Natural killer cell (primary cell): ENCODE measurements at regions of chr17 and their contacts with region 1.

Region 1: GRCh38 chr17:996554-997344 is at the start of gene TIMM22:
- DNase-seq: peak; percentile 92 to 97
- ATAC-seq: peak; percentile 91 to 97 (median 91)
- H3K4me3 ChIP-seq: peak within 1 kb of the TSS; percentile 92
- H3K4me3 Mint-ChIP-seq: peak within 1 kb of the TSS; percentile 97
- H3K27ac ChIP-seq: peak within 1 kb of the TSS; percentile 56
- H3K27ac Mint-ChIP-seq: peak within 1 kb of the TSS; percentile 96
- H3K4me1 ChIP-seq: peaks cover 19% of the 10 kb centered on the region
- H3K4me1 Mint-ChIP-seq: peaks cover 21 to 25% of the 10 kb centered on the region in 2 donors
- H3K27me3 ChIP-seq: no peaks in the 10 kb centered on the region
- H3K27me3 Mint-ChIP-seq: no peaks in the 10 kb centered on the region
- CTCF ChIP-seq: peak; percentile 89
- total RNA-seq, gene TIMM22: 7.8 to 11.3 (median 8.9) TPM

Region 2: DNA sequence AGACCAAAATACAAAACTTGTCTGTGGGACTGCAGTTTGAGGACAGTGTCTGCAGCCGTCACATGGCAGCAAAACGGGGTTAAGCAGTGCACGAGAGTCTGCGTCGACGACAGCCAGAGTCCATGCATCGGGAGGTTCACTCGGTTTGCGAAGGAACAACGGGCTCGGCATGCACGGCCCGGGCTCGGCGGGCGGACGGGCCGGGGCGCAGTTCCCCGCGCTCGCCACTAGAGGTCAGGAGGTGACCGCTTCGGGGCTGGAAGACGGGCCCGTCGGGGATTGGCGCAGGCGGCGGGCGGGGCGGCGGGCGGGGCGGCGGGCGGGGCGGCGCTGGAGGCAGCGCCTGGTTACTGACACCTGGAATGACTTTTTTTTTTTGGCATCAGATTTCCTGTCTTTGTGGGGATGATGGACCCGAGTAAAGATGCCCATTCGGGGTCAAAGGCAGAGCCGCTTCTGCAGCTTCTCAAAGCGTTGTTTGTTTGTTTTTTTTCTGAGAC is 852.9 kb before region 1 on chr17:
- intact Hi-C with region 1: loop called (anchors 5 kb)
- DNase-seq: peak; percentile 80 to 85
- ATAC-seq: peak; percentile 96 to 100 (median 99)
- H3K4me3 ChIP-seq: no peak overlapping the region
- H3K4me3 Mint-ChIP-seq: no peak overlapping the region
- H3K27ac ChIP-seq: no peak overlapping the region
- H3K27ac Mint-ChIP-seq: no peak overlapping the region
- H3K4me1 ChIP-seq: peaks cover 8% of the 10 kb centered on the region
- H3K4me1 Mint-ChIP-seq: no peaks in the 10 kb centered on the region
- H3K27me3 ChIP-seq: no peaks in the 10 kb centered on the region
- H3K27me3 Mint-ChIP-seq: peaks cover 0 to 11% of the 10 kb centered on the region in 2 donors
- CTCF ChIP-seq: peak; percentile 80

Region 3: GRCh38 chr17:409848-410545 is 586.8 kb before region 1 on chr17:
- intact Hi-C with region 1: loop called (anchors 2 kb)
- DNase-seq: peak; percentile 99 to 100
- ATAC-seq: peak; percentile 56 to 63 (median 57)
- H3K4me3 ChIP-seq: peak overlapping the region; percentile 81
- H3K4me3 Mint-ChIP-seq: peak overlapping the region; percentile 94
- H3K27ac ChIP-seq: peak overlapping the region; percentile 95
- H3K27ac Mint-ChIP-seq: peak overlapping the region; percentile 92 to 97
- H3K4me1 ChIP-seq: peaks cover 53% of the 10 kb centered on the region
- H3K4me1 Mint-ChIP-seq: peaks cover 47 to 50% of the 10 kb centered on the region in 2 donors
- H3K27me3 ChIP-seq: no peaks in the 10 kb centered on the region
- H3K27me3 Mint-ChIP-seq: peaks cover 0 to 3% of the 10 kb centered on the region in 2 donors
- CTCF ChIP-seq: no peak

Region 4: GRCh38 chr17:781805-782731 is 214.7 kb before region 1 on chr17 and contains the starts of genes GLOD4 and MRM3:
- intact Hi-C with region 1: loop called (anchors 1 kb)
- DNase-seq: peak; percentile 98 to 99
- ATAC-seq: peak; percentile 96 to 97 (median 96)
- H3K4me3 ChIP-seq: peak within 1 kb of the TSS; percentile 67
- H3K4me3 Mint-ChIP-seq: peak within 1 kb of the TSS; percentile 98
- H3K27ac ChIP-seq: peak within 1 kb of the TSS; percentile 67
- H3K27ac Mint-ChIP-seq: peak within 1 kb of the TSS; percentile 97 to 99
- H3K4me1 ChIP-seq: peaks cover 20% of the 10 kb centered on the region
- H3K4me1 Mint-ChIP-seq: peaks cover 22 to 27% of the 10 kb centered on the region in 2 donors
- H3K27me3 ChIP-seq: no peaks in the 10 kb centered on the region
- H3K27me3 Mint-ChIP-seq: no peaks in the 10 kb centered on the region
- CTCF ChIP-seq: no peak
- total RNA-seq, gene GLOD4: 62.5 to 67.1 (median 63.5) TPM
- total RNA-seq, gene MRM3: 24.3 to 32.2 (median 31.9) TPM

Region 5: DNA sequence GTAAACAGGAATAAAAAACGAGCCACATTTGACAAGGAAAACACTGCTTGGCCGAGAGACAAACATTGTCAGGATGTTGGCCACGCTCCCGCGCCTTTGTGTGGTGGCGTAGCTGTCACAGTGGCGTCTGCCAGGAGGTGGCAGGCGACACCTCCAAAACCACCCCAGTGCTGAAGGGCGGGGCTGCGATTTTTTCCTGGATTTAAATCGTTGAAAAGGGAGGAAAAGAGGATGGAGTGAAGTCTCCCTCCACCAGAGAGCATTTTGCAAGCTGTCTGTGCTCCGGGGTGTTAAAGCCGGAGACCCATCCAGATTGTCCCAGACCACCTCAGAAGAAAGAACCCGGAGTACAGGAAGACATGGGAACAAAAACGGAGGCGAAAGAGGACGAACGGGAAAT is 201.9 kb before region 1 on chr17:
- intact Hi-C with region 1: loop called (anchors 2 kb)
- DNase-seq: peak in 1 of 2 donors; percentile 69
- ATAC-seq: peak in 2 of 3 donors; percentile 60 to 73
- H3K4me3 ChIP-seq: no peak overlapping the region
- H3K4me3 Mint-ChIP-seq: peak overlapping the region; percentile 13
- H3K27ac ChIP-seq: no peak overlapping the region
- H3K27ac Mint-ChIP-seq: no peak overlapping the region
- H3K4me1 ChIP-seq: peaks cover 6% of the 10 kb centered on the region
- H3K4me1 Mint-ChIP-seq: peaks cover 6 to 9% of the 10 kb centered on the region in 2 donors
- H3K27me3 ChIP-seq: no peaks in the 10 kb centered on the region
- H3K27me3 Mint-ChIP-seq: no peaks in the 10 kb centered on the region
- CTCF ChIP-seq: peak; percentile 48

Region 6: GRCh38 chr17:807523-808294 is 189.0 kb before region 1 on chr17:
- intact Hi-C with region 1: no loop called
- DNase-seq: no peak
- ATAC-seq: no peak
- H3K4me3 ChIP-seq: no peak overlapping the region
- H3K4me3 Mint-ChIP-seq: no peak overlapping the region
- H3K27ac ChIP-seq: no peak overlapping the region
- H3K27ac Mint-ChIP-seq: no peak overlapping the region
- H3K4me1 ChIP-seq: no peaks in the 10 kb centered on the region
- H3K4me1 Mint-ChIP-seq: no peaks in the 10 kb centered on the region
- H3K27me3 ChIP-seq: no peaks in the 10 kb centered on the region
- H3K27me3 Mint-ChIP-seq: peaks cover 0 to 6% of the 10 kb centered on the region in 2 donors
- CTCF ChIP-seq: no peak

Region 7: GRCh38 chr17:879549-880442 is 117.0 kb before region 1 on chr17:
- intact Hi-C with region 1: loop called (anchors 1 kb)
- DNase-seq: peak; percentile 33 to 84
- ATAC-seq: peak in 2 of 3 donors; percentile 38 to 73
- H3K4me3 ChIP-seq: no peak overlapping the region
- H3K4me3 Mint-ChIP-seq: no peak overlapping the region
- H3K27ac ChIP-seq: no peak overlapping the region
- H3K27ac Mint-ChIP-seq: no peak overlapping the region
- H3K4me1 ChIP-seq: no peaks in the 10 kb centered on the region
- H3K4me1 Mint-ChIP-seq: peaks cover 0 to 4% of the 10 kb centered on the region in 2 donors
- H3K27me3 ChIP-seq: no peaks in the 10 kb centered on the region
- H3K27me3 Mint-ChIP-seq: peaks cover 0 to 13% of the 10 kb centered on the region in 2 donors
- CTCF ChIP-seq: peak; percentile 56

Region 8: GRCh38 chr17:979538-980405 is 17.0 kb before region 1 on chr17 and contains the start of gene NXN:
- intact Hi-C with region 1: loop called (anchors 2 kb)
- DNase-seq: peak; percentile 87 to 91
- ATAC-seq: peak; percentile 93 to 99 (median 95)
- H3K4me3 ChIP-seq: peak within 1 kb of the TSS; percentile 61
- H3K4me3 Mint-ChIP-seq: peak within 1 kb of the TSS; percentile 80
- H3K27ac ChIP-seq: no peak within 1 kb of the TSS
- H3K27ac Mint-ChIP-seq: peak within 1 kb of the TSS in 1 of 2 donors; percentile 83
- H3K4me1 ChIP-seq: peaks cover 21% of the 10 kb centered on the region
- H3K4me1 Mint-ChIP-seq: peaks cover 12 to 17% of the 10 kb centered on the region in 2 donors
- H3K27me3 ChIP-seq: peaks cover 27% of the 10 kb centered on the region
- H3K27me3 Mint-ChIP-seq: peaks cover 19 to 30% of the 10 kb centered on the region in 2 donors
- CTCF ChIP-seq: no peak
- total RNA-seq, gene NXN: 0.14 to 0.55 TPM in 2 of 3 donors, not detected in the other

Region 9: DNA sequence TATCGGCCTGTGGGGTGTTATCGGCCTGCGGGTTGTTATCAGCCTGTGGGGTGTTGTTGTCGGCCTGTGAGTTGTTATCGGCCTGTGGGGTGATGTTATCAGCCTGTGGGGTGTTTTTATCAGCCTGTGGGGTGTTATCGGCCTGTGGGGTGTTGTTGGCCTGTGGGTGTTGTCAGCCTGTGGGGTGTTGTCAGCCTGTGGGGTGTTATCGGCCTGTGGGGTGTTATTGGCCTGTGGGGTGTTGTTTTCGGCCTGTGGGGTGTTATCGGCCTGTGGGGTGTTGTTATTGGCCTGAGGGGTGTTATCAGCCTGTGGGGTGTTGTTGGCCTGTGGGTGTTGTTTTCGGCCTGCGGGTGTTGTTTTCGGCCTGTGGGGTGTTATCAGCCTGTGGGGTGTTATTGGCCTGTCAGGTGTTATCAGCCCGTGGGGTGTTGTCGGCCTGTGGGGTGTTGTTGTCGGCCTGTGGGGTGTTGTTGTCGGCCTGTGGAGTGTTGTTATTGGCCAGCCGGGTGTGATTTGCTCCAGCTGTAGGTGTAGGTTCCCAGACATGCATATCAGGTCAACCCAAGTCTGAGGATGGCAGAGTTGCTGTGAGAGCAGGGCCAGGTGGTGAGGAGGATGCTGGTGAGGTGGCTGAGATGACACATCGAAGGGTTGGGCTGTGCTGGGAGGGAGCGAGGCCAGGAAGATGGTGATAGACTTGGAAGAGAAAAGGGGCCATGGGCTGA is 289.8 kb after region 1 on chr17:
- intact Hi-C with region 1: no loop called
- DNase-seq: peak in 1 of 2 donors; percentile 57
- ATAC-seq: peak; percentile 76 to 81 (median 78)
- H3K4me3 ChIP-seq: no peak overlapping the region
- H3K4me3 Mint-ChIP-seq: peak overlapping the region; percentile 65
- H3K27ac ChIP-seq: peak overlapping the region; percentile 81
- H3K27ac Mint-ChIP-seq: peak overlapping the region; percentile 90 to 91
- H3K4me1 ChIP-seq: peaks cover 32% of the 10 kb centered on the region
- H3K4me1 Mint-ChIP-seq: peaks cover 34 to 54% of the 10 kb centered on the region in 2 donors
- H3K27me3 ChIP-seq: no peaks in the 10 kb centered on the region
- H3K27me3 Mint-ChIP-seq: no peaks in the 10 kb centered on the region
- CTCF ChIP-seq: no peak